ENCODE measurements at regions of chr1 and their contacts with region 1.

Region 1: GRCh38 chr1:11478571-11479374 is at the start of gene DISP3:
- DNase-seq: peak; percentile 77 to 92
- H3K4me3 ChIP-seq: peak within 1 kb of the TSS; percentile 37
- H3K4me1 ChIP-seq: no peaks in the 10 kb centered on the region; the same call in 1 of the 2 replicates
- H3K27me3 ChIP-seq: peaks cover 19% of the 10 kb centered on the region

Region 2: GRCh38 chr1:11629184-11630016 is 150.6 kb after region 1 on chr1:
- in situ Hi-C with region 1: loop called (anchors 10 kb)
- DNase-seq: no peak
- H3K4me3 ChIP-seq: no peak overlapping the region
- H3K4me1 ChIP-seq: no peaks in the 10 kb centered on the region
- H3K27me3 ChIP-seq: peaks cover 20% of the 10 kb centered on the region

Region 3: GRCh38 chr1:11719313-11720032 is 240.7 kb after region 1 on chr1:
- in situ Hi-C with region 1: loop called (anchors 10 kb)
- DNase-seq: peak; percentile 14 to 83
- H3K4me3 ChIP-seq: 0 out of 2 replicates have a peak overlapping the region, but pooled peaks have one; percentile 8
- H3K4me1 ChIP-seq: peaks cover 5% of the 10 kb centered on the region; the same call in 1 of the 2 replicates
- H3K27me3 ChIP-seq: no peaks in the 10 kb centered on the region